ENCODE measurements at regions of chr10 and their contacts with region 1.

Region 1: DNA sequence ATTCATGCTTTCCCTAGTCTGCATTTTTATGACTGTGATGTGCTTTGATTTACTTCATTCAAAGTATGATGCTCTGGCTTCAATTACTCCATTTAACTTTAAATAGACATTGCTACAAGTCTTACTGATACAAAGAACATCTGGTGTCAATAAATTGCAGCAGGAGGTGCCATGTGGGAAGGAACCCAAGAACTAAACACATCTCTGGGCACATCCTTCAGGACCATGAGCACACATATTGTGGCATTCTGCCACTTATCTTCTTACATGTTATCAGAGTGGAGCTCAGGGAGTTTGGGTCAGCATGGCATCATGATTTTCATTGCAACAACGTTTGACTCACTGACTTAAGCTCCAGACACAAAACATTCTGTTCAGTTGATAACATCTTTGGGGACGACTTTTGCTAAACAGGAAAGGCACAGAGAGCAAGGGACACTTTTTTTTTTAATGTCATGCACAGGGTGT is 227.0 kb downstream of the DKK1 start:
- DNase-seq: no peak
- H3K4me3 ChIP-seq: no peak overlapping the region
- CTCF ChIP-seq: no peak

Region 2: DNA sequence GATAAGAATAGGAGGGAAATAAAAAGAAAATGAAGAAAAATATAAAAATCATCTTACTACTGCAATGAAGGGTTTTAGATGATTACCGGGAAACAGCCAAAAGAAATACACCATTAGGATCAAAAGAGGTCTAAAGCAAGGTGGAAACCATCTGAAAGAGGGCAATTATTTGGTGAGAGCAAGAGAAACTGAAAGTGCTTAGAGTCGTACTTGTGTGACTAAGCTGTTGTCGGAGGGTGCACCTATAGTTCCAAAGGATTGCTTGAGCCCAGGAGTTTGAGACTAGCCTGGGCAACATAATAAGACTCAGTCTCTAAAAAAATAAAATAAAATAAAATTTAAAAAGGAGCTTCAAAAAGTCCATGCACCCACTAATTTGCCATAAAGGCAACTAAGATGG is 57.5 kb before region 1 on chr10:
- in situ Hi-C with region 1: no loop called
- DNase-seq: no peak
- H3K4me3 ChIP-seq: no peak overlapping the region
- CTCF ChIP-seq: no peak

Region 3: DNA sequence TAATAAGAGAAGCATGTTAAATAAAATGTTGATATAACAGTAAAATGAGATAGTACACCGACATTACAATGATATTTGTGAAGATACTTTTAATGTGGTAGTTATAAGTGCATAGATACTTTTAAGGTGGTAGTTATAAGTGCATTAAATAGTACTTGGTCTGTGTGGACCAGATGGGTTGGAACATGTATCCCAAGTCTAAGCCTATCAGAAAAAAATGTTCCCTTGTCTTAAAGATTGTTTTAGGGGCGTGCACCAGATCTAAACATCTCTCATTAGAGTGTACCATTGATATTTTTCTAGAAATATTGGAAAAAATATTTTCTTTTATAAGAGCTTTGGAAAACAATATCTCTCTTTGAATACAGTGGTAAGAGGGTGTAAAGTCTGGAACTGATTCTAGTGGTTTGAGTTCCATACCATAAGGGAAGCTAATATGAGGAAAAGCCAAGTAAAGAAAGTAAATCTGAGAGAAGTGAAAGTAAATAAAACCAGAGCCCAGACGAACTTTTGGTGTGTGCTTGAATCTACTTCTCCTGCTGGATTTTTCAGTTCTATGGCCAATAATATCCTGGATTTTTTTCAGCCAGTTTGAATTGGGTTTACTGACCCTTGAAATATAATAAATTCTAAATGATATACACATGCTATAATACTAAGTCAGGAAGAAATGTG is 56.3 kb after region 1 on chr10:
- in situ Hi-C with region 1: loop called (anchors 5 kb)
- DNase-seq: no peak
- H3K4me3 ChIP-seq: no peak overlapping the region
- CTCF ChIP-seq: no peak

Region 4: DNA sequence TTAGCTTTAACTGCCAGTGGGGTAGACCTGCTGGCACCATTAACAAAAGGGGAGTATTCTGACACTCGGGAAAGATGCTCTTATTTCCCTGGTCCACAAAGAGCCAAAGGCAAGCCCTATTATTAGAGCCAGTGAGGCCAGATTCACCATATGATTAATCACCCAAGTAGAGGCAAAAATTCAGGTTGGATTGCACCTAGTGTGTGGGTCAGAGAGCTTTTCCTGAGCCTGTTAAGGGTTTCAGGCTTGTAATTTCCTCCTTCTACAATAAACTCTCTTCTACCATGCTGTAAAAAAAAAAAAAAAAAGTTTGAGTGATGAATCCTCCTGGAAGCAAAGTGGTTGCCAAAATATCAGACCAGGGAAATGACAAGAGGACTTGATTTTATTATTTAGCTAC is 68.0 kb after region 1 on chr10:
- in situ Hi-C with region 1: no loop called
- DNase-seq: no peak
- H3K4me3 ChIP-seq: no peak overlapping the region
- CTCF ChIP-seq: no peak

Measured in astrocyte of the cerebellum (primary cell).